Ovary (tissue), 10 donors: ENCODE measurements at regions of chr2 and their contacts with region 1.

Region 1: GRCh38 chr2:105834931-105835330 is 90.2 kb downstream of the NCK2 start:
- DNase-seq: no peak
- H3K4me3 ChIP-seq: no peak overlapping the region
- H3K27ac ChIP-seq: no peak overlapping the region
- H3K4me1 ChIP-seq: peaks cover 9% of the 10 kb centered on the region
- H3K27me3 ChIP-seq: no peaks in the 10 kb centered on the region
- CTCF ChIP-seq: no peak
- EP300 ChIP-seq: no peak
- POLR2A ChIP-seq: no peak

Region 2: DNA sequence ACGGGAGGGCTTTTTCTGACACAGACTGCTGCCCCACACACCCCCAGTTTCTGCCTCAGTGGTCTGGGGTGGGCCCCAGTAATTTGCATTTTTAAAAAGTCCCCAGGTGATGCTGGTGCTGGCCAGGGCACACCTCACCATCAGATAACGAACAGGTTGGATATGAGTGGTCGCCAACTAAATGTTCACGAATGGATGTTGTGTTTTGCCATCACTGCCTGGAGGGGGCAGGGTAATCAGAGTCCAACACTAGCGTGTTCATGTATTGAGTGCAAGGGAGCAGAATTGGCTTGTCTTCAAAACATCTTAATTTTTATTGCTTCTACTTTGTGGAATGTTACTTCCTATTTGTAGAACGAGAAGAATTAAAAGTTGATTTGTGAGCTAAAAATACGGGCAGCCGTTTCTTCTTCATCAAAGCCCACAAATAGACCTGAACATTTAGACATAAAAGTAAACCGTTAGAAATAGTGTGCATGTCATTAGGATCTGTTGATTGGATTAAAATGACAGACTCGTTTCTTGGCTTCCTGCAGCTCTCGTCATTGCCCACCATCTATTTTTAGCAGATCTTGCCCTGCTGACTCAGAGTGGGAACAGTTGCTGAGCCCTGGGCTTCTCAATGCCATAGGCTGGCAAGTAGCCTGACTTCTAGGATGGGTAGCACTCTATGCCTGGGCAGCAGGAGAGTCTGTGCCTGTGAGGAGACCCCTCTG is 45.0 kb before region 1 on chr2:
- intact Hi-C with region 1: no loop called
- DNase-seq: no peak
- H3K4me3 ChIP-seq: no peak overlapping the region
- H3K27ac ChIP-seq: no peak overlapping the region
- H3K4me1 ChIP-seq: peaks cover 15% of the 10 kb centered on the region
- H3K27me3 ChIP-seq: no peaks in the 10 kb centered on the region
- CTCF ChIP-seq: no peak
- EP300 ChIP-seq: no peak
- POLR2A ChIP-seq: no peak

Region 3: DNA sequence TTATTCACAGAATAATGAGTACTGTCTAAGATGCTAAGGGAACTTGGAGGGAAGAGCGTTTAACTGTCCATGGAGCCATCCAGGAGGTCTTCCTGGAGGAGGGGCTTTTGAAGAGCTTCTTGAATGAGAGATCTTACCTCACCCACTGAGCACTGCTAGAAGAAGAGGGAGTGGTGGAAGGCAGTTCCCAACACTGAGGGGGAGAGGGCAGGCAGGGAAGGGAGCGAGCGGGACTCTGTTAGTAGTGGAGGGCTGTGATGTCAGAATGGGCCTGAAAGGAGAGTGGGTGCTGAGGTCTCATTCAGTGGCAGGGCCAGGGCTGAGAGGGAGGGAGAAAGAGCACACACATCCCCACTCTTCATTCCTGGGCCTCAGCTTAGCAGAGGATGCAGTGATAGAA is 25.2 kb before region 1 on chr2:
- intact Hi-C with region 1: loop called in 1 of 4 experiments (anchors 1 kb)
- DNase-seq: no peak
- H3K4me3 ChIP-seq: no peak overlapping the region
- H3K27ac ChIP-seq: no peak overlapping the region
- H3K4me1 ChIP-seq: peaks cover 10% of the 10 kb centered on the region
- H3K27me3 ChIP-seq: no peaks in the 10 kb centered on the region
- CTCF ChIP-seq: no peak
- EP300 ChIP-seq: no peak
- POLR2A ChIP-seq: no peak

Region 4: GRCh38 chr2:105919826-105920225 is 84.9 kb after region 1 on chr2:
- intact Hi-C with region 1: loop called in 1 of 4 experiments (anchors 5 kb)
- DNase-seq: no peak
- H3K4me3 ChIP-seq: no peak overlapping the region
- H3K27ac ChIP-seq: no peak overlapping the region
- H3K4me1 ChIP-seq: peaks cover 6% of the 10 kb centered on the region
- H3K27me3 ChIP-seq: no peaks in the 10 kb centered on the region
- CTCF ChIP-seq: no peak
- EP300 ChIP-seq: no peak
- POLR2A ChIP-seq: no peak